GM12878 (cell line): ENCODE measurements at regions of chr18 and their contacts with region 1.

Region 1: GRCh38 chr18:58043491-58044379 is at the start of gene NEDD4L:
- DNase-seq: peak; percentile 53
- ATAC-seq: peak; percentile 83
- H3K4me3 ChIP-seq: peak within 1 kb of the TSS; percentile 96
- H3K27ac ChIP-seq: peak within 1 kb of the TSS; percentile 37
- H3K4me1 ChIP-seq: peaks cover 6% of the 10 kb centered on the region; the same call in 1 of the 2 replicates
- H3K27me3 ChIP-seq: no peaks in the 10 kb centered on the region
- CTCF ChIP-seq: peak; percentile 80 to 91 (median 90)
- EP300 ChIP-seq: 0 out of 4 replicates have a peak, but pooled peaks of 1 of the 2 experiments have one; percentile 15
- POLR2A ChIP-seq: no peak
- RAD21 ChIP-seq: peak; percentile 83
- polyA plus RNA-seq, gene NEDD4L: 7.4 to 8.8 TPM

Region 2: GRCh38 chr18:57881818-57882413 is 161.8 kb before region 1 on chr18:
- CTCF ChIA-PET with region 1: interaction called, 16 read pairs
- POLR2A ChIA-PET with region 1: no interaction called
- RAD21 ChIA-PET with region 1: interaction called, 11 read pairs
- SMC1A ChIA-PET with region 1: interaction called, 5 read pairs
- in situ Hi-C with region 1: no loop called
- intact Hi-C with region 1: loop called (anchors 2 kb)
- DNase-seq: peak; percentile 32
- ATAC-seq: peak; percentile 98
- H3K4me3 ChIP-seq: no peak overlapping the region
- H3K27ac ChIP-seq: no peak overlapping the region
- H3K4me1 ChIP-seq: no peaks in the 10 kb centered on the region
- H3K27me3 ChIP-seq: no peaks in the 10 kb centered on the region
- CTCF ChIP-seq: peak; percentile 89 to 94 (median 90); a peak in 5 of 6 replicates
- EP300 ChIP-seq: no peak
- POLR2A ChIP-seq: no peak
- RAD21 ChIP-seq: peak; percentile 93

Region 3: GRCh38 chr18:58057291-58057965 is 13.7 kb after region 1 on chr18:
- CTCF ChIA-PET with region 1: interaction called, 30 read pairs
- POLR2A ChIA-PET with region 1: no interaction called
- RAD21 ChIA-PET with region 1: interaction called, 12 read pairs
- SMC1A ChIA-PET with region 1: interaction called, 17 read pairs
- in situ Hi-C with region 1: no loop called
- intact Hi-C with region 1: no loop called
- DNase-seq: no peak
- ATAC-seq: no peak
- H3K4me3 ChIP-seq: no peak overlapping the region
- H3K27ac ChIP-seq: no peak overlapping the region
- H3K4me1 ChIP-seq: no peaks in the 10 kb centered on the region
- H3K27me3 ChIP-seq: no peaks in the 10 kb centered on the region
- CTCF ChIP-seq: no peak
- EP300 ChIP-seq: no peak
- POLR2A ChIP-seq: no peak
- RAD21 ChIP-seq: no peak

Region 4: GRCh38 chr18:58110398-58110797 is 66.7 kb after region 1 on chr18:
- CTCF ChIA-PET with region 1: interaction called, 16 read pairs
- POLR2A ChIA-PET with region 1: interaction called, 5 read pairs
- RAD21 ChIA-PET with region 1: interaction called, 15 read pairs
- SMC1A ChIA-PET with region 1: interaction called, 8 read pairs
- in situ Hi-C with region 1: no loop called
- intact Hi-C with region 1: no loop called
- DNase-seq: peak; percentile 61
- ATAC-seq: peak; percentile 85
- H3K4me3 ChIP-seq: no peak overlapping the region
- H3K27ac ChIP-seq: peak overlapping the region; percentile 9; the same call in 1 of the 2 replicates
- H3K4me1 ChIP-seq: peaks cover 12% of the 10 kb centered on the region
- H3K27me3 ChIP-seq: no peaks in the 10 kb centered on the region
- CTCF ChIP-seq: no peak
- EP300 ChIP-seq: 0 out of 4 replicates have a peak, but pooled peaks of 1 of the 2 experiments have one; percentile 11
- POLR2A ChIP-seq: no peak
- RAD21 ChIP-seq: no peak

Region 5: DNA sequence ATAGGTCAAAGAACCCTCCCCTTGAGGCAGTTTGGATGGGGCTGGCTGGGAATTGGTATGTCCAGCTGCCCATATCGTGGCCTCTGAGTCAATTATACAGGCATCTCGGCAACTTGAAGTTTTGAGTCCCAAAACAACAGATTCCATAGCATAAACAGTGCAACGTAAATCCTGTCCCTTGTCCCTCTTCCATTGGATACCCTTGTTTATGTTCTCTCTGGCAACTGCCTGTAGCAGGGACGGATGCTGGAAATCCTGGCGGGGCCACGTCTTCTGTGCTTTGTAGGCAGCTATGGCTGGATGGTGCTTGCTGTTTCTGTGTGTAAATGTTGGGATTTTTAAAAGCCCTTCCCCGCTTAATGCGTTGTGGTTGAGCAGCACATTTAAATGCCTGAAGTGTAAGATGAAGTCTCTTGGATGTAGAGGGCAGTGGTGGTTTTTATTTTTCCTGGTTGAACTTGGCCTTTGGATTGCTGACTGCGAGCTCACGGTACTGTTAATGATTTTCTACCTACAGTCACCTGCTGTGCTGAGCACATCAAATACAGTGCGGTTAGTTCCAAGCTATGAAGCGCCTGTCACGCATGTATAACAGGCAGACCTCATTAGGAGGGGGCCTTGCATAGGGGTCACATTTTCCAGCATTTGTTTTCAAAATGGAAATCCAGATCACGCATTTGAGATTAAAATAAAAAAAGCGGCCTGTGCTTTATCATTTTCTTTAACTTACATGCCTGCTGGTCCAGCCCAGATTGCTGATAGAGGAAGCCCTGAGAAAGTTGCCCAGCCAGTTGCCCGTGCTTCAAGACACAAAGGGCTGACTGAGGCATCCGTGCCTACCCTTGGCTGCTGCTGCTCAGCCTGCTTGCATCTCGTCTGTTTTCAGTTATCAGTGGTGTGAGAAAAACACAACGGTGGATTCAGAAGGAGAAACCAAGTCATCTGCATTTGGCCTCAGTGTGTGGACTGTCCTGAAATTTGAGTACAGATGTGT is 84.9 kb after region 1 on chr18:
- CTCF ChIA-PET with region 1: interaction called, 117 read pairs
- POLR2A ChIA-PET with region 1: no interaction called
- RAD21 ChIA-PET with region 1: interaction called, 41 read pairs
- SMC1A ChIA-PET with region 1: interaction called, 27 read pairs
- in situ Hi-C with region 1: loop called (anchors 5 kb)
- intact Hi-C with region 1: no loop called
- DNase-seq: no peak
- ATAC-seq: no peak
- H3K4me3 ChIP-seq: no peak overlapping the region
- H3K27ac ChIP-seq: no peak overlapping the region
- H3K4me1 ChIP-seq: no peaks in the 10 kb centered on the region
- H3K27me3 ChIP-seq: no peaks in the 10 kb centered on the region
- CTCF ChIP-seq: no peak
- EP300 ChIP-seq: no peak
- POLR2A ChIP-seq: no peak
- RAD21 ChIP-seq: no peak

Region 6: GRCh38 chr18:58321986-58322385 is 278.3 kb after region 1 on chr18:
- CTCF ChIA-PET with region 1: no interaction called
- POLR2A ChIA-PET with region 1: no interaction called
- RAD21 ChIA-PET with region 1: no interaction called
- SMC1A ChIA-PET with region 1: interaction called, 3 read pairs
- in situ Hi-C with region 1: no loop called
- intact Hi-C with region 1: loop called (anchors 10 kb)
- DNase-seq: no peak
- ATAC-seq: peak; percentile 96
- H3K4me3 ChIP-seq: no peak overlapping the region
- H3K27ac ChIP-seq: no peak overlapping the region
- H3K4me1 ChIP-seq: peaks cover 7% of the 10 kb centered on the region
- H3K27me3 ChIP-seq: no peaks in the 10 kb centered on the region
- CTCF ChIP-seq: peak; percentile 45 to 77 (median 56); a peak in 4 of 6 replicates
- EP300 ChIP-seq: no peak
- POLR2A ChIP-seq: no peak
- RAD21 ChIP-seq: peak; percentile 77

Region 7: GRCh38 chr18:59763541-59764136 is 1719.9 kb after region 1 on chr18:
- CTCF ChIA-PET with region 1: no interaction called
- POLR2A ChIA-PET with region 1: no interaction called
- RAD21 ChIA-PET with region 1: no interaction called
- SMC1A ChIA-PET with region 1: no interaction called
- in situ Hi-C with region 1: no loop called
- intact Hi-C with region 1: no loop called
- DNase-seq: no peak
- ATAC-seq: no peak
- H3K4me3 ChIP-seq: no peak overlapping the region
- H3K27ac ChIP-seq: no peak overlapping the region
- H3K4me1 ChIP-seq: no peaks in the 10 kb centered on the region
- H3K27me3 ChIP-seq: no peaks in the 10 kb centered on the region
- CTCF ChIP-seq: no peak
- EP300 ChIP-seq: no peak
- POLR2A ChIP-seq: no peak
- RAD21 ChIP-seq: no peak